CD4-positive, alpha-beta memory T cell (primary cell): ENCODE measurements at regions of chr6 and their contacts with region 1.

Region 1: DNA sequence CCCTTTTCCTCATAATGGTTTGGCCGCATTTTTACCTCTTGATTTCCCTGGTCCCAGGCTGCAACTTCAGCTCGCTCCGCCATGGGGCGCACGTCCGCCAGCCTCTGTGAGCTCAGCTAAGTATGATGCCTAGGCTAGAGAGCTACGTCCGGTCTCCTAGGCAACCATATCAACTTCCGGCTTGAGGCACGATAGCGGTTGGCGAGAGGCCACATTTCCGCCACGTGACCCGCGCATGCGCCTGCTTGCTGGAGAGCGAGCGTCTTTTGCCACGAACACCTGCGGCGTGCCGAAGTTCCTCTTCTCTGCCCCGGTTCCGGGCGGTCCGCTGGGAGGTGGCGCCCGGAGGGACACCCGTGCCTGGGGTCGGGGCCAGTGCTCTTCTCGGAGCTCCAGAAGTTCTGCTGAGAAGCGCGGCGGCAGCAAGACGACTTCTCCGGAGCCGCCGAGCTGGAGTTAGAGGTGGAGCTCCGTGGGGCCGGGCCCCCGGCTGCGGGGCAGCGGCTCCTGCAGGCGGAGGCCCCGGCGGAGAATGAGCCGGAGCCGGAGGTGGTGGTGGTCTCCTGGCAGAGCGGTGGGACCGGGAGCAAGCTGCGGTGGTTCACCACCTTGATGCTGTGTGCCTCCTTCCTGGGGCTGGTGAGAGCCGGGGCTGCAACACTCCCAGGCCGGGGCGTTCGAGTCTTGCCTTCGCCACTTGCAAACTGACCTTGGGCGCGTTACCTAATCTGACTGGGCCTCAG is 172.0 kb downstream of the SLC16A10 start:
- DNase-seq: peak; percentile 99
- H3K4me3 ChIP-seq: peak overlapping the region; percentile 42 to 71
- H3K4me3 Mint-ChIP-seq: peak overlapping the region; percentile 84 to 90 (median 87)
- H3K27ac ChIP-seq: peak overlapping the region; percentile 84
- H3K27ac Mint-ChIP-seq: peak overlapping the region; percentile 87 to 98 (median 96)
- H3K4me1 ChIP-seq: peaks cover 35% of the 10 kb centered on the region
- H3K4me1 Mint-ChIP-seq: peaks cover 16 to 34% (median 23%) of the 10 kb centered on the region in 4 donors
- H3K27me3 ChIP-seq: no peaks in the 10 kb centered on the region
- H3K27me3 Mint-ChIP-seq: peaks cover 3 to 4% of the 10 kb centered on the region in 2 donors

Region 2: GRCh38 chr6:110179401-110180227 is 1079.6 kb before region 1 on chr6 and contains the start of gene WASF1:
- CTCF ChIA-PET with region 1: no interaction called
- POLR2A ChIA-PET with region 1: no interaction called
- intact Hi-C with region 1: loop called (anchors 5 kb)
- DNase-seq: peak; percentile 90 to 93 (median 92)
- H3K4me3 ChIP-seq: peak within 1 kb of the TSS; percentile 77 to 92
- H3K4me3 Mint-ChIP-seq: peak within 1 kb of the TSS; percentile 82 to 92 (median 86)
- H3K27ac ChIP-seq: peak within 1 kb of the TSS; percentile 88
- H3K27ac Mint-ChIP-seq: peak within 1 kb of the TSS; percentile 24 to 90 (median 64)
- H3K4me1 ChIP-seq: peaks cover 46% of the 10 kb centered on the region
- H3K4me1 Mint-ChIP-seq: peaks cover 5 to 7% (median 6%) of the 10 kb centered on the region in 4 donors
- H3K27me3 ChIP-seq: no peaks in the 10 kb centered on the region
- H3K27me3 Mint-ChIP-seq: peaks cover 4 to 5% of the 10 kb centered on the region in 2 donors
- total RNA-seq, gene WASF1: 0.39 to 0.70 TPM

Region 3: DNA sequence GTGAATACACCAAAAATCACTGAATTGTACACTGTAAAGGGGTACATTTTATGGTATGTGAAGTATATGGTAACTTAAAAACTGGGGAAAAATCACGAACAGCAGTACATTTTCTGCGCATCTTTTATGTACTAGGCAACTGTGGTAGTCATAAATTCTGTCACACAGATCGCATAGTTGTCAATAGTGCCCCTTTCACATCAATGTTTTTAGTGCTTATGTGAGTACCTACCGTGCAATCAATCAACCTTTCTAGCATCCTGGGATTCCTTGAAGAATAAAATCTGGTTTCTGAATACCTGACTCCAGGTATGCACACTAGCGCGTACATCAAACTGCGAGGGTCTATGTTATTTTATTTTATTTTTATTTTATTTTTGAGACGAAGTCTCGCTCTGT is 278.1 kb before region 1 on chr6:
- CTCF ChIA-PET with region 1: interaction called, 7 read pairs
- POLR2A ChIA-PET with region 1: interaction called, 6 read pairs
- intact Hi-C with region 1: loop called (anchors 1 kb)
- DNase-seq: peak in 2 of 5 donors; percentile 1 to 29
- H3K4me3 ChIP-seq: peak overlapping the region; percentile 20 to 95
- H3K4me3 Mint-ChIP-seq: peak overlapping the region; percentile 93 to 99 (median 98)
- H3K27ac ChIP-seq: peak overlapping the region; percentile 86
- H3K27ac Mint-ChIP-seq: peak overlapping the region; percentile 99 to 100 (median 100)
- H3K4me1 ChIP-seq: peaks cover 17% of the 10 kb centered on the region
- H3K4me1 Mint-ChIP-seq: peaks cover 28 to 49% (median 30%) of the 10 kb centered on the region in 4 donors
- H3K27me3 ChIP-seq: no peaks in the 10 kb centered on the region
- H3K27me3 Mint-ChIP-seq: no peaks in the 10 kb centered on the region

Region 4: GRCh38 chr6:111238464-111239119 is 20.7 kb before region 1 on chr6:
- CTCF ChIA-PET with region 1: no interaction called
- POLR2A ChIA-PET with region 1: no interaction called
- intact Hi-C with region 1: no loop called
- DNase-seq: no peak
- H3K4me3 ChIP-seq: no peak overlapping the region
- H3K4me3 Mint-ChIP-seq: no peak overlapping the region
- H3K27ac ChIP-seq: no peak overlapping the region
- H3K27ac Mint-ChIP-seq: no peak overlapping the region
- H3K4me1 ChIP-seq: no peaks in the 10 kb centered on the region
- H3K4me1 Mint-ChIP-seq: no peaks in the 10 kb centered on the region
- H3K27me3 ChIP-seq: no peaks in the 10 kb centered on the region
- H3K27me3 Mint-ChIP-seq: peaks cover 2 to 5% of the 10 kb centered on the region in 2 donors

Region 5: DNA sequence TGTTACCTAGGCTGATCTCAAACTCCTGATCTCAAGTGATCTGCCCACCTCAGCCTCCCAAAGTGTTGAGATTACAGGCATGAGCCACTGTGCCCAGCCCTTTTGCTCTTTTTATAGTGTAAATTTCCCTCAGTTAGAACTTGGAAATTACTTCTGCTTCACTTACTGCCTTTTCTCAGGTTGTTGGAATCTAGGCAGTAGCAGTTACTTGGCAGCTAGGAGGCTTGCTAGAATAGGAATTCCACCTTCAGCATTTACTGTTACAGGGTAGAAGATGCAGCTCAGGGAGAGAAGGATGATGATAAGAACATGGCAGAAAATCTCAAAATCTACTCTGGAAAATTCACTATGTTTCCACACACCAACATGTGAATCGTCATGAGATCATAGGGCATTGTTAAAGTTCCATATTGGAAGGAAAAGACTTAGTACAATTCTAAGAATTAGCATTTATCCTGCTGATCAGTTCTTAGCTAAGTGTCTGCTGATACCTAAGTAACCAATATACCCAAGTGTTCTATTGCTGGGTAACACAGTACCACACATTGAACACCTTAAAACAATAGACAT is 10.2 kb after region 1 on chr6:
- CTCF ChIA-PET with region 1: interaction called, 19 read pairs
- POLR2A ChIA-PET with region 1: interaction called, 3 read pairs
- intact Hi-C with region 1: no loop called
- DNase-seq: no peak
- H3K4me3 ChIP-seq: no peak overlapping the region
- H3K4me3 Mint-ChIP-seq: no peak overlapping the region
- H3K27ac ChIP-seq: no peak overlapping the region
- H3K27ac Mint-ChIP-seq: no peak overlapping the region
- H3K4me1 ChIP-seq: peaks cover 12% of the 10 kb centered on the region
- H3K4me1 Mint-ChIP-seq: peaks cover 9 to 39% (median 18%) of the 10 kb centered on the region in 4 donors
- H3K27me3 ChIP-seq: no peaks in the 10 kb centered on the region
- H3K27me3 Mint-ChIP-seq: no peaks in the 10 kb centered on the region

Region 6: DNA sequence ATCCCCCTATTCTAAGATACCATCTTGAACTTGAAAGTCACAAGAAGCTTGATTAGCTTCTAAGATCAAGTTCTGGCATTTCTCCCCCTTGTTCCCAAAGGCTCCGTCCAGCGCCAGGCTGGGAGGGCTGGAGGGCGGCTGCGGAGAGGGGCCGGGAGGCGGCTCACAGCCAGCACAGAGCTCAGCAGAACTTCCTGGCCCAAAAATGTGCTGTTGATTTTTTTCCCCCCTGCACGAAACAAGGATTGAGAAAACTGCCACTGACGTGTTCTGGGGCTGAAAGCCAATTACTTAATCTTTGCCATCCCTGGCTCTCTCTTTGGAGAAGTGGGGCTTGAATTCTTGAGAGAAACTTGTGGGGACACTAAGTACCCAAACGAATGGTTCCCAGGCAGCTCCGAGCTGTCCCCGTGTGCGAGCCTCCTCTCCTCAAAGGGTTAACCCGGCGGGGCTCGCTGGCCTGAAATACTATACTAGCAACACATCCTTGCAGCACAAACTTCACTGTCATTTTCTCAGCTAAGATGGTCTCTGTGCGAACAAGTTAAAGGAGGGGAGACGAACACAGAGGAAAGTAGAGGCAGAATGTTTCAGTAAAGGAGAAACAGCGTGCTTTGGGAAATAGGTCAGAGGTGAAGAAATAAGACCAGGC is 346.0 kb after region 1 on chr6:
- CTCF ChIA-PET with region 1: interaction called, 21 read pairs
- POLR2A ChIA-PET with region 1: interaction called, 15 read pairs
- intact Hi-C with region 1: loop called (anchors 1 kb)
- DNase-seq: no peak
- H3K4me3 ChIP-seq: peak overlapping the region; percentile 59 to 79
- H3K4me3 Mint-ChIP-seq: peak overlapping the region; percentile 88 to 97 (median 92)
- H3K27ac ChIP-seq: peak overlapping the region; percentile 80
- H3K27ac Mint-ChIP-seq: peak overlapping the region; percentile 90 to 97 (median 95)
- H3K4me1 ChIP-seq: peaks cover 43% of the 10 kb centered on the region
- H3K4me1 Mint-ChIP-seq: peaks cover 27 to 61% (median 47%) of the 10 kb centered on the region in 4 donors
- H3K27me3 ChIP-seq: no peaks in the 10 kb centered on the region
- H3K27me3 Mint-ChIP-seq: no peaks in the 10 kb centered on the region

Region 7: DNA sequence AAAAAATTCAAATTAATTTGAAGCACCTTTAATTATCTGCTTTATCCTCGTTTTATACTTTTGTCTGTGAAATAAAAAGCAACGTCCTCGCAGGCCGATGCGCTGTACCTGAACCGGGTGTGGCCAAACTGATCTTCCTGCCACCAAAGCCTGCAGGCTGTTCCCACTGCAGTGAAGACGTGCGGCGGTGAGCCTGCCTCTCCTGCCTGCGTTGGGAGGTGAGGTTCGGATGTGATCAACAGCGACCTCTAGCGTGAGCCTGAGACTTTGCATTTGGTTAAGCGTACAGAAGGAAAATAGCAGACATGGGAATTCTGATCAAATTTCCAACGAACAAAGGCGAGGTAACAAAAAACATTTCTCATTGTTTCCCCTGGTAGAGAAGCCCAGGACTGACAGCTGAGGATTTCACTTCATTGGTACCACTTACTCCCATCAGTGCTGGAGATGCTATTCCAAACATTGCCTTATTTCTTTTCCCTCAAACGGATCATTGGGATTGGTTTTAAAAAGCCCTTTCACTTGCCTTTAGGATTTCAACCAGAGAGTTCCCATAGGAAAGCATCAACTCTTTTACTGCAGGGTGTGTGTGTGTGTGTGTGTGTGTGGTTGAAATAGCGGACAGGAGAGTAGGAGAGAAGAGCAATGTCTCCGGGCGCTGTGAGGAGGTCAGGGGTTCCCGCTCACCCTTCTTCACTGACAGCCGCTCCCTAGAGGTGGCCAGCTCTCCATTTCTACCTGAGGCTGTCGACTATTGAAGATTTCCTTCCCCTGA is 738.0 kb after region 1 on chr6:
- CTCF ChIA-PET with region 1: interaction called, 3 read pairs
- POLR2A ChIA-PET with region 1: no interaction called
- intact Hi-C with region 1: loop called (anchors 2 kb)
- DNase-seq: peak; percentile 76 to 79 (median 78)
- H3K4me3 ChIP-seq: peak overlapping the region in 1 of 2 donors; percentile 21
- H3K4me3 Mint-ChIP-seq: peak overlapping the region; percentile 64 to 85 (median 80)
- H3K27ac ChIP-seq: no peak overlapping the region
- H3K27ac Mint-ChIP-seq: peak overlapping the region; percentile 76 to 90 (median 85)
- H3K4me1 ChIP-seq: peaks cover 38% of the 10 kb centered on the region
- H3K4me1 Mint-ChIP-seq: peaks cover 39 to 47% (median 42%) of the 10 kb centered on the region in 4 donors
- H3K27me3 ChIP-seq: no peaks in the 10 kb centered on the region
- H3K27me3 Mint-ChIP-seq: no peaks in the 10 kb centered on the region